Naive thymus-derived CD4-positive, alpha-beta T cell (primary cell): ENCODE measurements at regions of chr7 and their contacts with region 1.

Region 1: DNA sequence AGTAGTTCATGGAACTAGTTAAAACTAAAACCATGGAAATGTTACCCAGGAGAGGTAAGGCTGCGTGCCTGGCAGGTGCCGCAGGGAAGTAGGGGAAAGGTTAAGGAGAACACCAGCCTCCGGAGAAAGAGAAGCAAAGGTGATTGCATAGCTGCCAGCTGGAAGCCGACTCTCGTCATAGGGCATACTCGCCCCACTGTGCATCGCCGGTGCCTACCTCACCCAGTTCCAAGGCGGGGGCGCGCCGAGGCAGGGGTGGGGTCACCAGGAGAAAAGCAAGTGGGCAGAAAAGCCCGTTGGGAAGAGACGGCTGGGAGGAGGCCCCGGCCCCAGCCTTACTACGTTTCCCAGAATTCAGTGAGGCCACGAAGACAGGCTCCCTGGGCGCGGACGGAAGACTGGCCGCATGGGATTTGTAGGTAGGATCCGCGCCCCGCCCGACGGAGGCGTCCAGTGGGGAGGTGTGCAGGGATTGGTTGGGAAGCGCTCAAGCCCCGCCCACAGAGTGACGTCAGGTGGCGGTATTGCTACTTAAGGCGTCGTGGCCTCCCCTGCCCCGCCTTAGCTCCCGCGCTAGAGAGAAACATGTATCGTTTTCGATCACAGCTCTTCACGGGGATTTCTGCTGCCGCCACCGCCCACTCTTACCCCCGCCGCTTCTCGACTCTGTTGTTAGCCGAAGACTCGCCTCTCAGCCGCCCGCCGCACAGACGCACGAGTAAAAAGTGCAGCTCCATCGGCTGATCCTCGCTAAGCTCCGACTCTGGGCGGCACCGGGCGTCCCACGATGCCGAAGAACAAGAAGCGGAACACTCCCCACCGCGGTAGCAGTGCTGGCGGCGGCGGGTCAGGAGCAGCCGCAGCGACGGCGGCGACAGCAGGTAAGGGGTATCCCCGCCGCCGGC is at the start of gene IFRD1:
- DNase-seq: peak; percentile 96 to 100 (median 98)
- ATAC-seq: peak; percentile 92
- H3K4me3 ChIP-seq: peak within 1 kb of the TSS; percentile 99
- H3K4me3 Mint-ChIP-seq: peak within 1 kb of the TSS; percentile 96 to 100 (median 98)
- H3K27ac ChIP-seq: peak within 1 kb of the TSS; percentile 96
- H3K27ac Mint-ChIP-seq: peak within 1 kb of the TSS; percentile 89 to 99 (median 99)
- H3K4me1 ChIP-seq: peaks cover 10 to 14% of the 10 kb centered on the region in 2 donors
- H3K4me1 Mint-ChIP-seq: peaks cover 24 to 54% (median 45%) of the 10 kb centered on the region in 7 donors
- H3K27me3 ChIP-seq: no peaks in the 10 kb centered on the region
- H3K27me3 Mint-ChIP-seq: no peaks in the 10 kb centered on the region
- total RNA-seq, gene IFRD1: 32.2 to 250 (median 63.2) TPM

Region 2: DNA sequence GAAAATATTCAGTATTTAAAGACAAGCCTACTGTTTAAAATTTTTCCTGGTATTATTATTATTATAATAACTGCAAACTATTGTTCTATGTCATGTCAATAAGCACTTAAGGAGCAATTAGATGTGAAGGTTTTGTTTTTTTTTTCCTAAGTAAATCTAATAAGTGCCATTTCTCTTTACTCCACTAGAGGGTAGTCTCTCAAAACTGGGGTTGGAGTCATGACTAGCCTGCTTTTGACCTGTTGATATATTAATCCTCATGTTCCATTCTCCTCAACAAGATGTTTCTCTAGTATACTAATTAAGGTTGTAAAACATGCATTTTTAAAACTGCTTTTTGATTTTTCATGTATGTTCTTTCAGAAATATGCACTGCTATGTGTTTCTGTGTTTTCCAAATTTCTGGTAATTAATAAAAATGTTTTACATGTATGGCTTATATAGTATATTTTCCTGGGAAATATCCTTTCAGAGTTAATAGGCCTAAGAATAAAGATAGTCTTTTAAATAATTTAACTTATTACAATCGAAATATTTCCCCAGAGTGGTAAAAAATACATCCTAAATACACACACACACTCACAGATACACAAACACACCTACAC is 1360.2 kb before region 1 on chr7:
- CTCF ChIA-PET with region 1: no interaction called
- POLR2A ChIA-PET with region 1: no interaction called
- intact Hi-C with region 1: loop called in 1 of 2 experiments (anchors 10 kb)
- DNase-seq: peak in 4 of 9 donors; percentile 43 to 50 (median 47)
- ATAC-seq: peak; percentile 70
- H3K4me3 ChIP-seq: peak overlapping the region; percentile 58
- H3K4me3 Mint-ChIP-seq: peak overlapping the region; percentile 84 to 99 (median 98)
- H3K27ac ChIP-seq: no peak overlapping the region
- H3K27ac Mint-ChIP-seq: peak overlapping the region in 5 of 9 donors; percentile 25 to 97 (median 93)
- H3K4me1 ChIP-seq: peaks cover under 1 to 13% of the 10 kb centered on the region in 2 donors
- H3K4me1 Mint-ChIP-seq: peaks cover 6 to 77% (median 60%) of the 10 kb centered on the region in 7 donors
- H3K27me3 ChIP-seq: no peaks in the 10 kb centered on the region
- H3K27me3 Mint-ChIP-seq: no peaks in the 10 kb centered on the region

Region 3: GRCh38 chr7:112206238-112207044 is 243.7 kb before region 1 on chr7 and contains the starts of genes DOCK4 and ZNF277:
- CTCF ChIA-PET with region 1: interaction called, 3 read pairs
- POLR2A ChIA-PET with region 1: interaction called, 5 read pairs
- intact Hi-C with region 1: loop called (anchors 1 kb)
- DNase-seq: peak; percentile 97 to 100 (median 99)
- ATAC-seq: peak; percentile 93
- H3K4me3 ChIP-seq: peak within 1 kb of the TSS; percentile 94
- H3K4me3 Mint-ChIP-seq: peak within 1 kb of the TSS; percentile 93 to 99 (median 96)
- H3K27ac ChIP-seq: peak within 1 kb of the TSS; percentile 71
- H3K27ac Mint-ChIP-seq: peak within 1 kb of the TSS; percentile 60 to 95 (median 85)
- H3K4me1 ChIP-seq: peaks cover 14 to 22% of the 10 kb centered on the region in 2 donors
- H3K4me1 Mint-ChIP-seq: peaks cover 25 to 57% (median 39%) of the 10 kb centered on the region in 7 donors
- H3K27me3 ChIP-seq: peaks cover 15% of the 10 kb centered on the region in 2 donors
- H3K27me3 Mint-ChIP-seq: peaks cover 25 to 36% (median 29%) of the 10 kb centered on the region in 5 donors
- total RNA-seq, gene DOCK4: 0.19 to 3.1 (median 2.4) TPM
- total RNA-seq, gene ZNF277: 19.5 to 38.8 (median 25.9) TPM

Region 4: GRCh38 chr7:112462236-112462635 is 12.1 kb after region 1 on chr7:
- CTCF ChIA-PET with region 1: no interaction called
- POLR2A ChIA-PET with region 1: interaction called, 12 read pairs
- intact Hi-C with region 1: no loop called
- DNase-seq: no peak
- ATAC-seq: peak; percentile 68
- H3K4me3 ChIP-seq: no peak overlapping the region
- H3K4me3 Mint-ChIP-seq: no peak overlapping the region
- H3K27ac ChIP-seq: no peak overlapping the region
- H3K27ac Mint-ChIP-seq: peak overlapping the region in 1 of 9 donors; percentile 10
- H3K4me1 ChIP-seq: no peaks in the 10 kb centered on the region
- H3K4me1 Mint-ChIP-seq: peaks cover 0 to 6% (median 0%) of the 10 kb centered on the region in 7 donors
- H3K27me3 ChIP-seq: no peaks in the 10 kb centered on the region
- H3K27me3 Mint-ChIP-seq: no peaks in the 10 kb centered on the region

Region 5: DNA sequence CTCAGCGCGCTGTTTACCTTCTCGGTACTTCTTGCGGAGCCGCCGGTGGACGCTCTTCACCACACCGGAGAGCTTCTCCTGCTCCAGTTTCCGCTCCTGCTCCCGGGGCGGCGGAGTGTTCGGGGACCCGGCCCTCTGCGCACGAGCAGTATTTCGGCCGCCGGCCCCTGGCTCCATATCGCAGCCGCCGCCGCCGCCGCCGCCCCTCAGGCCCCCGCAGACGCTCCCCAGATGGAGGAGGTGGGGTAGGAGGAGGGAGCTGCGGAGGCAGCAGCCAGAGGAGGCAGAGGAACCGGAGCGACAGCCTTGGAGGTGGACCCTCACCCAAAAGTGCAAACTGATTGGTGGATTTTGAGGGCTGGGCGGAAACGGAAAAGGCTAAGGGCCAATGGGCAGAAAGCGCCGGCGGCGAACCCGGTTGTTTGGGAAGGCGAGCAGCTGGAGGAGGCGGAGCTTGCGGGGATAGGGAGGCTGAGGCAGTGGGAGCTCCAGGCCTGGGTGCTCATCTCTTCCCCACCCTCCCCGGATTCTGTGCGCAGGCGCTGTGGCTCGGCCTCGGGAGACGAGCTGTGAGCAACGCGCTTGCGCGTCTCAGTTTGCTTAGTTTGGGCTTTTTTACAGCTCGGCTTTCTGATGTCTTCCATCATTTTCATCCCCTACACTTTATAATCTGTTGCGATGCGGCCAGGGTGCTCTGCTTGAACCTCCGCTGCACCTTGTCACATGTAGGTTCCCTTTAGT is 489.6 kb after region 1 on chr7:
- CTCF ChIA-PET with region 1: no interaction called
- POLR2A ChIA-PET with region 1: interaction called, 19 read pairs
- intact Hi-C with region 1: loop called (anchors 1 kb)
- DNase-seq: peak; percentile 97 to 100 (median 99)
- ATAC-seq: peak; percentile 98
- H3K4me3 ChIP-seq: peak overlapping the region; percentile 84
- H3K4me3 Mint-ChIP-seq: peak overlapping the region; percentile 88 to 97 (median 95)
- H3K27ac ChIP-seq: peak overlapping the region; percentile 76
- H3K27ac Mint-ChIP-seq: peak overlapping the region; percentile 89 to 97 (median 94)
- H3K4me1 ChIP-seq: peaks cover 19 to 29% of the 10 kb centered on the region in 2 donors
- H3K4me1 Mint-ChIP-seq: peaks cover 22 to 57% (median 52%) of the 10 kb centered on the region in 7 donors
- H3K27me3 ChIP-seq: no peaks in the 10 kb centered on the region
- H3K27me3 Mint-ChIP-seq: peaks cover 0 to 4% (median 0%) of the 10 kb centered on the region in 5 donors